H1 (cell line): ENCODE measurements at regions of chr15 and their contacts with region 1.

Region 1: GRCh38 chr15:96345560-96346399 is 15.3 kb downstream of the NR2F2 start:
- DNase-seq: peak in 1 of 2 experiments; percentile 73
- H3K4me3 ChIP-seq: peak overlapping the region in 3 of 4 experiments; percentile 29 to 52 (median 40); a peak in 7 of 8 replicates
- H3K27ac ChIP-seq: no peak overlapping the region
- H3K4me1 ChIP-seq: peaks cover 20 to 37% (median 25%) of the 10 kb centered on the region in 4 experiments; a peak in 6 of 7 replicates
- H3K27me3 ChIP-seq: peaks cover 89 to 97% (median 93%) of the 10 kb centered on the region in 4 experiments
- CTCF ChIP-seq: peak; percentile 46 to 54 (median 54)
- EP300 ChIP-seq: no peak
- POLR2A ChIP-seq: no peak
- RAD21 ChIP-seq: peak; percentile 74 to 80

Region 2: DNA sequence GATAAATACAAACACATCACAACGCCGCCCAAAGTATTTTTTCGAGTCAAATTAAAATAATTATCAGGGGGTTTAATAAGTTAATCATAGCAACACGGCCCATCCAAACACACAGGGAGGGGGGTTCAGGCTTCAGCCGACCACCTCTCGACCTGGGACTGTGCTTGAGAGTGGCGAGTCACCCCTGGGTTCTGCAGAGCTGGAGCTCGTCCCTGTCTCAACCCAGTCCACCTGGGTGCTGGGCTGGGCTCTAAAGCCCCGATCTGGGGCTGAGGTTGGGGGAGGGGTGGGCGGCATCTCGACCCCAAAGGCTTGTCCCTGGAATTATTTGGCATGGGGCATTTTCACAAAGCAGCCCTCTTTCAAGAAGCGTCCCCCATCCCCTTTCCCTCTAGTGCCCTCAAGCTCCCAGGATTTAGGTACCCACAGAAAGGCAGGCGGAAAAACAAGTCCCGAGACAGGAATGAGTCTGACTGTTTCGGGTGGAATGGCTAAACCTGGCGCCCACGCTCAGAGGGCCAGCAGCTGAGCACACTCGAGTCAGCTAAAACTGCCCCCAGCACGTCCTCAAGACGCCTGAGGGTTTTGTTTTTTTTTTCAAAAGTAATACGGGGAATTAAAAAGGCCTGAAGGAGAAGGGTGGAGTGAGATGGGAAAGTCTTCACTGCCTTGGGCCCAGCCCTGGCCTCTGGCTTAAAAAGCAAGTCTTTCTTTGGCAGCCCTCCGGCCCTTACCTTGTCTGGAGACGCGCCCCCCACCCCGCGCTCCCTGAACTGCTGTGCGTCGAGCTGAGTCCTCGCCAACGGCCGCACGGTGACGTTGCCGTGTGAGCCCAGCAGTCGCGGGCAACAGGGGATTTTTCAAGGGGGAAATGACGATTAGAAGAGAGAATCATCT is 17.2 kb after region 1 on chr15:
- CTCF ChIA-PET with region 1: interaction called, 11 read pairs
- POLR2A ChIA-PET with region 1: interaction called, 9 read pairs
- DNase-seq: peak in 1 of 2 experiments; percentile 71
- H3K4me3 ChIP-seq: peak overlapping the region in 1 of 4 experiments; percentile 45; a peak in 2 of 8 replicates
- H3K27ac ChIP-seq: no peak overlapping the region
- H3K4me1 ChIP-seq: peaks cover 0 to 34% (median 19%) of the 10 kb centered on the region in 4 experiments; a peak in 5 of 7 replicates
- H3K27me3 ChIP-seq: peaks cover 97 to 100% (median 99%) of the 10 kb centered on the region in 4 experiments
- CTCF ChIP-seq: no peak
- EP300 ChIP-seq: no peak
- POLR2A ChIP-seq: no peak
- RAD21 ChIP-seq: peak in 1 of 2 experiments; percentile 21; a peak in 1 of 4 replicates